ENCODE measurements at regions of chr2 and their contacts with region 1.

Region 1: DNA sequence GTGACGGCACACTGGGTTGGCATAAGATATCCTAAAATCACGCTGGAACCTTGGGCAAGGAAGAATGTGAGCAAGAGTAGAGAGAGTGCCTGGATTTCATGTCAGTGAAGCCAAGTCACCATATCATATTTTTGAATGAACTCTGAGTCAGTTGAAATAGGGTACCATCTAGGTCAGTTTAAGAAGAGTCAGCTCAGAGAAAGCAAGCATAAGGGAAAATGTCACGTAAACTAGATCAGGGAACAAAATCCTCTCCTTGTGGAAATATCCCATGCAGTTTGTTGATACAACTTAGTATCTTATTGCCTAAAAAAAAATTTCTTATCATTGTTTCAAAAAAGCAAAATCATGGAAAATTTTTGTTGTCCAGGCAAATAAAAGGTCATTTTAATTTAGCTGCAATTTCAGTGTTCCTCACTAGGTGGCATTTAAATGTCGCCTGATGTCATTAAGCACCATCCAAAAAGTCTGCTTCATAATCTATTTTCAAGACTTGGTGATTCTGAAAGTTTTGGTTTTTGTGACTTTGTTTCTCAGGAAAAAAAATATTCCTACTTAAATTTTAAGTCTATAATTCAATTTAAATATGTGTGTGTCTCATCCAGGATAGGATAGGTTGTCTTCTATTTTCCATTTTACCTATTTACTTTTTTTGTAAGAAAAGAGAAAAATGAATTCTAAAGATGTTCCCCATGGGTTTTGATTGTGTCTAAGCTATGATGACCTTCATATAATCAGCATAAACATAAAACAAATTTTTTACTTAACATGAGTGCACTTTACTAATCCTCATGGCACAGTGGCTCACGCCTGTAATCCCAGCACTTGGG is 19.6 kb downstream of the RSAD2 start:
- DNase-seq: no peak
- ATAC-seq: peak in 1 of 2 donors; percentile 75
- H3K4me3 ChIP-seq: no peak overlapping the region
- H3K27ac ChIP-seq: peak overlapping the region; percentile 42
- H3K4me1 ChIP-seq: peaks cover 3% of the 10 kb centered on the region
- H3K27me3 ChIP-seq: no peaks in the 10 kb centered on the region

Region 2: GRCh38 chr2:6960659-6961058 is 63.5 kb after region 1 on chr2:
- intact Hi-C with region 1: no loop called
- DNase-seq: no peak
- ATAC-seq: peak; percentile 68 to 74
- H3K4me3 ChIP-seq: no peak overlapping the region
- H3K27ac ChIP-seq: peak overlapping the region; percentile 6
- H3K4me1 ChIP-seq: peaks cover 8% of the 10 kb centered on the region
- H3K27me3 ChIP-seq: no peaks in the 10 kb centered on the region

Region 3: GRCh38 chr2:7044261-7045250 is 147.4 kb after region 1 on chr2:
- intact Hi-C with region 1: loop called (anchors 5 kb)
- DNase-seq: peak; percentile 68 to 85 (median 80)
- ATAC-seq: peak; percentile 83 to 86
- H3K4me3 ChIP-seq: no peak overlapping the region
- H3K27ac ChIP-seq: no peak overlapping the region
- H3K4me1 ChIP-seq: peaks cover 3% of the 10 kb centered on the region
- H3K27me3 ChIP-seq: no peaks in the 10 kb centered on the region